ENCODE measurements at regions of chr6 and their contacts with region 1.

Region 1: GRCh38 chr6:53854843-53855567 is 60.2 kb downstream of the LRRC1 start:
- DNase-seq: no peak
- H3K4me3 ChIP-seq: no peak overlapping the region
- H3K27ac ChIP-seq: no peak overlapping the region
- H3K4me1 ChIP-seq: peaks cover 30% of the 10 kb centered on the region
- H3K27me3 ChIP-seq: no peaks in the 10 kb centered on the region
- CTCF ChIP-seq: no peak
- POLR2A ChIP-seq: no peak

Region 2: DNA sequence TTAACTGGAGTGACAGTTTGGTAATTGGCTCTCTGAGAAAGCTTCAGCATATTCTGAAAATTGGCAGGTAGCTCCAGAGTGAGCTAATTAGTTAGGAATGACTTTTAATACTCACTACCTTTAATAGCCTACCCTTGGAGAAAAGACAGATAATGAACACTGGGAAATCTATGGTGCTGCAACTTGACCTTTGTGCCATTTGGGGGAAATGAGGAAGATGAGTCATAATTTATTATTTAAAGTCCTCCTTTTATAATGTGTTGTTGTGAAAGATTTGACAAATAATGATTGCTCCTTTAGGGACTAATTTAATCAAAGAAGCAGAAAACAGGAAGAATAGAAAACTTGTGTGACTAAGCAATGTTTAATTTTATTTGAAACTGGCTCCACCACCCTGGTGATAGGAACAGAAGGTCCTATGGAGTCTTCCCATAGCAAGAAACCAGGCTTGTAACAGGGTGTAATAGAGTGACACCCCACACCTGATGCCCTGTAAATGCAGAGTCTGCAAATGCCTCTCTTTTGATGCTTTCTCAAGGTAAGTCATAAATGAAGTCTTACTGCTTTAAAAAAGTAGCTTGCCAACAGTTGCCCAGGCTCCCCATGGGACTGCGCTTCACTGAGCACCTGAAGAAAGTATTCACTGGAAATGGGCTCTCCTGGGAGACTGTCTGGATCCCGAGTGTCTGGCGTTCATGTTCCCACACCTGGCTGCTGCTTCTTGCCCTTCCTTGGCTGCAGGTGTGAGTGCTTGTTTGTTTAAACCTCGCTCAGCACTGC is 74.2 kb after region 1 on chr6:
- CTCF ChIA-PET with region 1: interaction called, 3 read pairs
- POLR2A ChIA-PET with region 1: no interaction called
- dilution Hi-C with region 1: no loop called
- intact Hi-C with region 1: loop called (anchors 2 kb)
- DNase-seq: peak; percentile 94
- H3K4me3 ChIP-seq: no peak overlapping the region
- H3K27ac ChIP-seq: peak overlapping the region; percentile 71
- H3K4me1 ChIP-seq: peaks cover 42% of the 10 kb centered on the region
- H3K27me3 ChIP-seq: no peaks in the 10 kb centered on the region
- CTCF ChIP-seq: no peak
- POLR2A ChIP-seq: no peak